GM10248 (cell line): ENCODE measurements at regions of chr18 and their contacts with region 1.

Region 1: GRCh38 chr18:2627821-2628276 is 27.7 kb upstream of the SMCHD1 start:
- DNase-seq: no peak
- CTCF ChIP-seq: no peak

Region 2: DNA sequence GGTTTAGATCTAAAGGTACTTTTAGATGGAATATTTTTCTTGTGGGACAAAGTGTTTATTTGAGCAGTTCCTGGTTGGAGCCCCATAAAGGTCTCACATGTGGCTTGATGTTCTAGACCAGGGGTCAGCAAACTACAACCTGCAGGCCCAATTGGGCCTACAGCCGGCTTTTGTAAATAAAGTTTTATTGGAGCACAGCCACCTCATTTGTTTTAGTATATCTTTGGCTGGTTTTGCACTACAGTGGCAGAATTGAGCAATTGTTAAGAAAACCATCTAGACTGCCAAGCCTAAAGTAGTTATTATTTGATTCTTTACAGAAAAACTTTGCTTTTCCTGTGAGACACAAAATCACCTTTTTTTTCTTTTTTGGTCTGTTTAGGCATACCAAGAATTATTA is 14.9 kb before region 1 on chr18:
- CTCF ChIA-PET with region 1: interaction called, 11 read pairs
- POLR2A ChIA-PET with region 1: no interaction called
- DNase-seq: no peak
- CTCF ChIP-seq: no peak

Region 3: GRCh38 chr18:2641638-2642037 is 13.8 kb after region 1 on chr18:
- CTCF ChIA-PET with region 1: interaction called, 4 read pairs
- POLR2A ChIA-PET with region 1: interaction called, 10 read pairs
- DNase-seq: peak; percentile 72
- CTCF ChIP-seq: no peak

Region 4: GRCh38 chr18:2655178-2655953 is 27.5 kb after region 1 on chr18 and contains the start of gene SMCHD1:
- CTCF ChIA-PET with region 1: no interaction called
- POLR2A ChIA-PET with region 1: no interaction called
- DNase-seq: peak; percentile 90
- CTCF ChIP-seq: peak; percentile 5